ENCODE measurements at regions of chr2 and their contacts with region 1.

Region 1: GRCh38 chr2:48946449-48947048 is 191.0 kb upstream of the LHCGR start:
- DNase-seq: peak; percentile 8
- H3K4me3 Mint-ChIP-seq: no peak overlapping the region
- H3K27ac Mint-ChIP-seq: no peak overlapping the region
- H3K4me1 Mint-ChIP-seq: no peaks in the 10 kb centered on the region
- H3K27me3 Mint-ChIP-seq: no peaks in the 10 kb centered on the region

Region 2: DNA sequence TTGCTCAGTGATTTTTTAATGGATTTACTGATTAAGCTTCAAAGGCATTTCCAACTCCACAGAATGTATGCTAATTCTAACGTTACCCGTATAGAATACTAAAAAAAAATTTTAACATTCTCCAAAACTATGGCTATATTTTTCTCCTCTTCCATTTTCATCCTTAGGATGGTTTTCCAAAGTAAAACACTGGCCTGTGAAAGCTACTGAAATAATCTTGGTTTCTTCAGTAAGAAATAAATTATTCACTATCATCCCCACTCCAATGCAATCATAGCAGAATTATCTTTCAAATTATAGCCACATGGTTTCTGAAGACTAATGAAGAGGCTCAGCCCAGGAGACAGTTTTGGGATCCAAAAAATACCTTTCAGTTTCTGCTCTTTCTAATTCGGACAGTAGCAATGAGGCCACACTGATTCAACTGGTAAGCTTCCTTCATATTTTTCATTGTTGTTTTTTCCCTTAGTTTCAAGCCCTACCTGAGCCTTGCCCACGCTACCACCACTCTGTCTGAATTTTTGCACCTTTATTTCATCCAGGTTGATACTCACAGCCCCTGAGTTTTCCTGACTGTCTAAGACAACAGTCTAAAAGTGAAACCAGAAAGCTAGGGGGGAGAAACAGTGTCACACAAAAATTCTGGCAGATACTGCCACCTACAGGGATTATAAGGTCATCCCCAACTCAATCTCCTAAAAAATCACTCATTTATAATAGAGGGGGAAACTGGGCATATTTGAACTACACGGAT is 1197.5 kb after region 1 on chr2:
- intact Hi-C with region 1: loop called (anchors 5 kb)
- DNase-seq: peak; percentile 8
- H3K4me3 Mint-ChIP-seq: peak overlapping the region; percentile 47
- H3K27ac Mint-ChIP-seq: no peak overlapping the region
- H3K4me1 Mint-ChIP-seq: peaks cover 5% of the 10 kb centered on the region
- H3K27me3 Mint-ChIP-seq: no peaks in the 10 kb centered on the region

Region 3: DNA sequence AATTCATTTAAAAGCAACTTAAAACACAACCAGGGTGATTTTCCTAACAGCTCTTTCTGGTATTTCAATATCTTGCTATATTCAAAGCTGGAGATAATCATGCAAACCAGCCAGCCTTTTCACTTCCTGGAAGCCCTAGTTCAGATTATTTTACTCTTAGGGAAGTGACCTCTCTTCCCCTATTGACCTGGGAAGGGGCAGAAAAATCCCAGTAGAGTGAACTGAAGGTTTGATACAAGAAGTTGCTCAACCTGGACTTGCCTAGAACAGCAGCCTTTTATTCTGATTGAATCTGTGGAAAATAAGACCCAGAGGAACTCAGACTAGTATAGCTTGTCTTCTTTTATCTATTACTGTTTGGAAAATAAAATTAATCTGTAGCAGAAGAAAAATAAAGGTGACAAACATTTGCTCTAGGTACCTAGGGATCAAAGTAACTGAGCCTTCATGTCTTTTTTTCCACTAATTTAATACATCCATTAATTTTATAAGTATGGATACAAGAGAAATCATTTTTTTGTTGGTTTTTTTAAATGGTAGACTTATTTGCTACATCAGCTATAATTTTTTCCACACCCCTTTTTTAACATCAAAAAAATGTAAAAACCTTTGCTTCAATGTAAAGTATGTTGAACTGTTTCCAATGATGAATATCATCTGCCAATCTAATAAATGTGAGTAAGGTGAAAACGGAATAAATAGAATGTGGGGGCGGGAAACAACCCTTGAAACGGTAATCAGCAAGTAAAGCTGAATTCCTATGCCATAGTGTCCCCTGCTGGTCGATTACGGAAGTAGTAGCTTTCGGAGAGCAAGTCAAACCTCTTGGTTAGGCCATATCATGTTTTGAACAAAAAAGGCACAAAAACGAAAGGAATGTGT is 1455.5 kb after region 1 on chr2:
- intact Hi-C with region 1: loop called (anchors 5 kb)
- DNase-seq: peak; percentile 9
- H3K4me3 Mint-ChIP-seq: no peak overlapping the region
- H3K27ac Mint-ChIP-seq: no peak overlapping the region
- H3K4me1 Mint-ChIP-seq: no peaks in the 10 kb centered on the region
- H3K27me3 Mint-ChIP-seq: no peaks in the 10 kb centered on the region

Region 4: DNA sequence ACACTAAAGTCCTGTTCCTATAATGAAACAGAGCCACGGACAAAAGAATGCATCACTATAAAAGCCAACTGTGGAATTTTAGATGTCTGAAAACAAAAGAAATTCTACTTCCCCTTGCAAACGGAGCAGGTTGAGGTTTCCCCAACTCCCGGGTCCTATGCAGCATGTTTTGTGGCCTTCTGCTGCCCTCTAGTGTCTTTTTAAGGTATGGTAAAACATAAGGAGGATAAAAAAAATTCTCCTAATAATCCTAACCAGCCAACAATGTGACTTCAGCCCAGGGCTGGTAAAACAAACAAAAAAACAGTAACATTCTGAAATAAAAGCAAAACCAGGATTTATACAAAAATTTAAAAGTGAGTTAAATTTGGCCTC is 1545.9 kb after region 1 on chr2:
- intact Hi-C with region 1: loop called (anchors 1 kb)
- DNase-seq: no peak
- H3K4me3 Mint-ChIP-seq: no peak overlapping the region
- H3K27ac Mint-ChIP-seq: no peak overlapping the region
- H3K4me1 Mint-ChIP-seq: no peaks in the 10 kb centered on the region
- H3K27me3 Mint-ChIP-seq: no peaks in the 10 kb centered on the region

Measured in activated T-helper 2 cell treated with anti-CD3 and anti-CD28 coated beads, Interferon-gamma antibody, Interleukin-2, Interleukin-4, amounts not matched to agents 10 μg/mL and 5 μg/mL and 100 μg/mL, durations not matched to agents 14 hours and 24 hours and 36 hours (primary cell).